ENCODE measurements at regions of chr13 and their contacts with region 1.

Region 1: GRCh38 chr13:36420437-36420891 is 11.8 kb upstream of the CCNA1 start:
- DNase-seq: peak; percentile 23
- H3K4me3 ChIP-seq: no peak overlapping the region
- H3K27ac ChIP-seq: no peak overlapping the region
- H3K27me3 ChIP-seq: no peaks in the 10 kb centered on the region
- CTCF ChIP-seq: peak; percentile 91

Region 2: DNA sequence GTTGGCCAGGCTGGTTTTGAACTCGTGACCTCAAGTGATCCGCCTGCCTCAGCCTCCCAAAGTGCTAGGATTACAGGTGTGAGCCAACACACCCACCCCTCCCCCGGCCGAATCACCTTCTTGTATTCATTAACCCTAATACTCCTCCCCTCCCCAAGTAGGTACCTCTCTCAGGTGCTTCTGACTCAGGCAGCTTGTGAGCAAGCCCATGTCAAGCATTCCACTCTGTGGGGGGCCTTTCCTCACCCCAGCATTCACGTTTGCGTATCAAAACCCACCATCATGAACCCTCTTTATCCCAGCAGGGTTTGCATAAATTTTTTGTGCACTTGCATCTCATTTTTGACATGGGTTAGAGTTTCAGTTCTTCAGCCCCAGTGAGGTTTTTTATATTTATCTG is 375.0 kb after region 1 on chr13:
- CTCF ChIA-PET with region 1: no interaction called
- POLR2A ChIA-PET with region 1: no interaction called
- DNase-seq: no peak
- H3K4me3 ChIP-seq: no peak overlapping the region
- H3K27ac ChIP-seq: no peak overlapping the region
- H3K27me3 ChIP-seq: no peaks in the 10 kb centered on the region
- CTCF ChIP-seq: no peak

Region 3: DNA sequence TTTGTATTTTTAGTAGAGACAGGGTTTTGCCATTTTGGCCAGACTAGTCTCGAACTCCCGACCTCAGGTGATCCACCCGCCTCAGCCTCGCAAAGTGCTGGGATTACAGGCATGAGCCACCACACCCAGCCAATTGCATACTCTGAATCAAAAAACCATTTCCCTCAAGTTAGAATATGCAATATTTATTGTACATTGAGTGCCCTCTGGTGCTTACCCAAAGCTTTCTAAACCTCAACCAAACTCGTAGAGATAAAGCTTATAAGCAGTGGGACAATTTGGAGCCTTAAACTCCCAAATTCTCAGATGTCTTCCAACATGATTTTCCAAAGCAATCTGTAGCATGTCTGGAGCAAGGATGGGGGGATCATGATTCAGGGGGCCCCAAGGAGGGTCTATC is 420.9 kb after region 1 on chr13:
- CTCF ChIA-PET with region 1: interaction called, 15 read pairs
- POLR2A ChIA-PET with region 1: no interaction called
- DNase-seq: no peak
- H3K4me3 ChIP-seq: no peak overlapping the region
- H3K27ac ChIP-seq: no peak overlapping the region
- H3K27me3 ChIP-seq: no peaks in the 10 kb centered on the region
- CTCF ChIP-seq: no peak; the same call in 1 of the 2 replicates

Region 4: GRCh38 chr13:36848199-36848982 is 427.9 kb after region 1 on chr13:
- CTCF ChIA-PET with region 1: interaction called, 10 read pairs
- POLR2A ChIA-PET with region 1: no interaction called
- DNase-seq: no peak
- H3K4me3 ChIP-seq: no peak overlapping the region
- H3K27ac ChIP-seq: no peak overlapping the region
- H3K27me3 ChIP-seq: no peaks in the 10 kb centered on the region
- CTCF ChIP-seq: 0 out of 2 replicates have a peak, but pooled peaks have one; percentile 20

Region 5: DNA sequence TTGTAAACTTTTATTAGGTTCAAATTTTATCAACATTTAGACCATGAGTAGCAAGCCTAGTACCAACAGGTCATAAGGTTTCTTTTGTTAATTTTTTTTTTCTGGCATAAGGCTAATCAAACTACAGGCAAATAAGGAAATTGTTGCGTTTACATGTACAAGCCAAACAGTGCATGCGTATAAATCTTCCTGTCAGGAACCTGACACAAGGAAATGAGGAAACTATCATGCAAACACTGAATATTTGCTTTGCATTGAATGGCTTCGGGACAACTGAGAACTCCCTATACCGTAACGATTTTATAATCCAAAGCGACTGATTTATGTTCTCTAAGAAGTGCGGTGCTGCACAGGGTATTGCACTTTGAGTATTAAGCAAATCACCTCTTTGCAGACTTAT is 1582.1 kb after region 1 on chr13:
- CTCF ChIA-PET with region 1: no interaction called
- POLR2A ChIA-PET with region 1: no interaction called
- DNase-seq: no peak
- H3K4me3 ChIP-seq: no peak overlapping the region
- H3K27ac ChIP-seq: no peak overlapping the region
- H3K27me3 ChIP-seq: no peaks in the 10 kb centered on the region
- CTCF ChIP-seq: no peak

Measured in AG04450 (cell line).